Dorsolateral prefrontal cortex (tissue), 120 donors: ENCODE measurements at regions of chr10 and their contacts with region 1.

Region 1: DNA sequence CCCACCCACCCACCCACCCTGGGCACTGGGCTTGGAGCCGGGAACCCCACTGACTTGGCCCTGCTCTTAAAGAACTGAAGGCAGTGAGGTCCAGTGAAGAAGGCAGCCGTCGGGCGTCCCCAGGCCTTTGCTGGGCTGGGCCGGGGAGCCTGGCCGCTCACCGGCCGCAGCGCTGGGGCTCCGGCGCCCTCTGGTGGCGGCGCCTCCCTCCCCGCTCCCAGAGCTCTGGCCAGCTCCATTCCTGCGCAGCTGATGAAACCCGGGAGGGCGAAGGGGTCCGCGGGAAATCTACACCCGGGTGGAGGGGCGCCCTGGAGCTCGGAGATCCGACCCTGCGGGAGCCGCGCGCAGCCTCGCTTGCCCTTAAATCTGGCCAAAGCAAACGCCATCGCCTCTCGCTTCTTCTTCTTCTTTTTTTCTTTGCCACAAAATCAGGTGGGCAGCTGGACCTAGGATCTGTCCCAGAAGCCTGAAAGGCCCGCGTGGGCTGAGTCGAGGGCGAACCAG is 1.7 kb upstream of the CXCL12 start:
- DNase-seq: peak in 6 of 10 donors; percentile 40 to 79 (median 48)
- H3K4me3 ChIP-seq: peak overlapping the region in 22 of 59 donors; percentile 1 to 51 (median 23)
- H3K27ac ChIP-seq: no peak overlapping the region
- H3K27me3 ChIP-seq: peaks cover 0 to 55% (median 14%) of the 10 kb centered on the region in 45 donors
- CTCF ChIP-seq: peak; percentile 58 to 94 (median 85)

Region 2: DNA sequence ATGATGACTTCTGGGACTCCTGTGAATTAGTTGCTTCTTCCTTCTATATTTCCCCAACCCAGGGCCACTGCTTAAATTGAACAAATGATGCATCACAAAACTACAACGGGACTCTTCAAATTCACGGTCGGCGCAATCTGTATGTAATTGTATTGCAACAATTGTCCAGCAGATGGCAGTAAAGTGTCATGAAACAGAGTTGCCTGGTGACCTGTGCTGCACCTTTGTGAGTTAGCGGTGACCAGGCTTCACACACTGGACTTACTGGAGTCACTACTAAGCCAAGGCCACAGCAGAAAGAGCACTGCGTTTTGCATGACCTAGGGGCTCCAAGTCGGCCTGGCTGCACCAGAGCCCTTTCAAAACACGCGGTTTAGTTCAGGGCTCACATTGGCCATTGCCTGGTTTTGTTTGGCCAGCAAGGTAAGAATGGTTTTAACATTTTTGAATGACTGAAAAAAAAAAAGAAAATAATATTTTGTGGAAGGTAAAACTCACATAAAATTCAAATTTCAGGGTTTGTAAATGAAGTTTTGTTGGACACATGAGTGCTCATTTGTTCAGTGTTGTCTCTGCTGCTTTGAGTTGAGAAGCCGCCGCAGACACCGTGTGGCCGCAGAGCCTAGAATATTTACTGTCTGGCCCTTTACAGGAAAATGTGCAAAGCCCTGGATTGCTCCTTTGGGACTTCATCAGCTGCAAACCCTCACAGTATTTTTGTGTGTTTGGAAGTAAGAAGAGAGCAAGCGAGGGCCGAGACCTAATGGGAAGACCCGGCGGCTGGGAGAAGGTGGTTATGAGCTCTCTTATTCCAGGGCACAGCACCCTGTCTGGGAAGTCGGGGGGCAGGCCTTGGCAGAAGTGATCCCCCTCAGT is 714.7 kb before region 1 on chr10:
- intact Hi-C with region 1: loop called (anchors 5 kb)
- DNase-seq: peak in 3 of 10 donors; percentile 50 to 61 (median 59)
- H3K4me3 ChIP-seq: no peak overlapping the region
- H3K27ac ChIP-seq: no peak overlapping the region
- H3K27me3 ChIP-seq: peaks cover 0 to 39% (median 18%) of the 10 kb centered on the region in 45 donors
- CTCF ChIP-seq: peak; percentile 64 to 95 (median 85)

Region 3: DNA sequence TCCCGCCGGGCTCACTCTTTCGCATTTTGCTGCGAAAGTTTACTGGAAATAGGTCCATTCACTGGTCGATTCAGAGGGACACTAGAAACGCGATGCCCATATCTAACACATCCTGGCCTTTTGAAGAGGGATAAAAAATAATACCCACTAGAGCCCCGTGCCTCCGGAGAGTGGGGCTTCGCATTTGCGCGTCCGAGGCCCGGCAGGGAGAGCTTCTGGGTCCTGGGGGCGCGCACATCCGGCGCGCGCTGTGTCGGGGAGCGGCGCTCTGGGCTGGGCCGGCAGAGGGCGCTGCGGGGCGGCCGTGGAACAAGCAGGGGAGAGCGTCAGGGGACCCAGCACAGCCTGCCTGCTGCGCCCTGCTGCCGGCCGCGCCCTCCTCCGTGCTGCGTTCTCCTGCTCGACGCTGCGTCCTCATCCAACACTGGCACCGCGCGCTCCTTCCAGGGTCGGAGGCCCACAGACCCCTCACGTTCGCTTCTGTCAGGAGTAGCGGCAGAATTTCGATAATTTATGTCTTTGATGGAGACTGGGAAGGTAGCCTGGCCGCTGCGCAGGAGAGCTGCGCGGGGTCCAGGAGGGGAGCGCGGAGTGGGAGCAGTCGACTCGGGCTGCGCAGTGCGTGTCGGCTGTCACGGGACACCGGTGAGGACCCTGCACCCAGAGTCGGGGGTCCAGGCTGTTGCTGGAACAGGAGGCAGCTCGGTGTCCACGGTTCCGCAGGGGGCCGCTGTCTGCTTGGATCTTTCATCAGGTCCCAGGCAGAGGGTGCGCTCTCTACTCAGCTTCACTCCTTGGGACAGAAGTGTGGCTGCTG is 696.4 kb before region 1 on chr10:
- intact Hi-C with region 1: loop called (anchors 2 to 5 kb)
- DNase-seq: peak; percentile 63 to 88 (median 78)
- H3K4me3 ChIP-seq: peak overlapping the region; percentile 34 to 88 (median 68)
- H3K27ac ChIP-seq: peak overlapping the region in 37 of 59 donors; percentile 5 to 82 (median 67)
- H3K27me3 ChIP-seq: peaks cover 0 to 9% (median 0%) of the 10 kb centered on the region in 45 donors
- CTCF ChIP-seq: peak; percentile 41 to 98 (median 82)

Region 4: GRCh38 chr10:44293842-44294241 is 92.8 kb before region 1 on chr10:
- intact Hi-C with region 1: loop called in 1 of 2 experiments (anchors 5 kb)
- DNase-seq: no peak
- H3K4me3 ChIP-seq: peak overlapping the region in 16 of 59 donors; percentile 29 to 58 (median 46)
- H3K27ac ChIP-seq: peak overlapping the region in 42 of 59 donors; percentile 3 to 83 (median 52)
- H3K27me3 ChIP-seq: peaks cover 0 to 6% (median 0%) of the 10 kb centered on the region in 45 donors
- CTCF ChIP-seq: no peak

Region 5: DNA sequence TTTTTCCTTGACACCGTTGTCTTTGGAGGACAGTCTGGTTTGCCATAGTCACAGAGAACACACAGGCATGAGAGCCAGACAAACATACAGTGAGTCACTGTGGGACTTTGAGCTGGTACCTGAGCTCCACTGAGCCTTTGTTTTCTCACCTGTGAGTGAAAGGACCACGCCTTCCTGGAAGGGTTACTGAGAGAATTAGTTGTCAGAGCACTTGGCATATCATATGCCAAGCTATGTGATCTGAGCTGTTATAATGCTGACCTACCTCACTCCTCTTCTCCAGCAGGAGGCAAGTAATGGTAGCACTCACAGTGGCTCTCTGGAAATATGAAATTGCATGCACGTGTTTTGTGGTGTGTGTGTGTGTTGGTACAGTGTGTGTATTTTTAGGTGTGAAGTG is 61.4 kb before region 1 on chr10:
- intact Hi-C with region 1: no loop called
- DNase-seq: no peak
- H3K4me3 ChIP-seq: no peak overlapping the region
- H3K27ac ChIP-seq: no peak overlapping the region
- H3K27me3 ChIP-seq: no peaks in the 10 kb centered on the region
- CTCF ChIP-seq: no peak

Region 6: GRCh38 chr10:44439239-44439957 is 52.8 kb after region 1 on chr10:
- intact Hi-C with region 1: no loop called
- DNase-seq: peak in 1 of 10 donors; percentile 28
- H3K4me3 ChIP-seq: no peak overlapping the region
- H3K27ac ChIP-seq: peak overlapping the region in 14 of 59 donors; percentile 3 to 75 (median 53)
- H3K27me3 ChIP-seq: peaks cover 0 to 4% (median 0%) of the 10 kb centered on the region in 45 donors
- CTCF ChIP-seq: no peak

Region 7: DNA sequence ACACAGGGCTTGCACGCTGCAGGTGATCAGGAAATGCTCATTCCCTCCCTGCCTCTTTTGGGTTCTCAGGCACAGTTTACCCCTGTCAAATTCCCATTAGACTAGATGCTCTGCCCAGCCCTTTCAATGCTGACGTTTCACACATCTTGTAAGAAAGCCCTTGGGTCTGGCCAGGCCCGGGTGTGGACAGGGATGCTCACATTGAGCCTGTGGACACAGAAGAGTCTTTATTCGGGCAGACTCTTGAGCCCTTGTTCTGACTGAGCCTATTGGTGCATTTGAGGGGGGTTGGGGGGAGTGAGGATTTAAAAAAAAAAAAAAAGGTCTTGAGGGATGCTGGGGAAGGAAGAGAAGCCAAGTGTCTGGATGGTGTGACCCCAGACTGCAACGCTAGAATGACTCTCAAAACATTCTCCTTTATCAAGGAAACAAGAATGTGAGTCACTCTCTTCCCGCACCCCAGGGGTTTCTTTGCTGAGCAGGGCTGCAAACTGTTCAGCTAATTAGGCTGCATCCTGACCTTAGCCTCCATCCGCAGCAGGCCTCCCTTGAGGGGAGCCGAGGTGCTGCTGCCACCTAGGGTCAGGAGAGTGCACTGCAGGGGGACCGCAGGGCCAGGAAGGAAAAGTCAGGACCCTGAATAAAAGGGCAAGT is 470.9 kb after region 1 on chr10:
- intact Hi-C with region 1: loop called (anchors 5 to 10 kb)
- DNase-seq: peak in 7 of 10 donors; percentile 28 to 70 (median 48)
- H3K4me3 ChIP-seq: no peak overlapping the region
- H3K27ac ChIP-seq: no peak overlapping the region
- H3K27me3 ChIP-seq: peaks cover 0 to 7% (median 0%) of the 10 kb centered on the region in 45 donors
- CTCF ChIP-seq: peak; percentile 84 to 99 (median 96)

Region 8: DNA sequence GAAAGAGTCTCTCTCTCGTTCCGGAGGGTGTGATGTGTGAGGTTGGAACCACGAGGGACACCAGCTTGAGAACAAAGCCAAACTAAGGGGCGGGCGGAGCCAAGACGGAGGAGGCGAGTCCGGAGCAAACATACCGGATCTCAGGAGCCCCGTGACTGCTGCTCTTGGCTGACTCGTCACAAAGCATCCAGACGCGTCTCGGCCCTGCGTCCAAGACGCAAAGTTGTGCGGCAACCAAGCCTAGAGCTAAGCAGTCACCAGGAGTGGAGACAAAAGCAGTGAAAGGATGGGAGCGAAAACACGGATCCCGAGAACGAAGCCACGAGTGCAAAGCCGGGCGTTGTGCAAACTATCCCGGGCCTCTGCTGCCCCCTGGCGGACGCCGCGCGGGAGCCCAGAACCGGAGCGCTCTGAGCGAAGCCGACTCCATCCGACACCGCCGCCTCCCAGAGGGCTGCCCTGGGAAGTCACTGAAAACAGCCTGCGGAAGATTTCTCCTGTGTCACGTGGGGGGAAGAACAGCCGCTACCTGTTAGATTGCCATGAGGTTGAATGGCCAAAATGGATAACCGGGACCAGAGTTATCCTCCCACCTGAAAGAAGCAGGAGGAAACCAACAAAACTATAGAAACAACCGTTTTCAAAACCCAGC is 478.2 kb after region 1 on chr10:
- intact Hi-C with region 1: loop called (anchors 5 to 10 kb)
- DNase-seq: peak; percentile 81 to 95 (median 92)
- H3K4me3 ChIP-seq: peak overlapping the region; percentile 16 to 74 (median 60)
- H3K27ac ChIP-seq: peak overlapping the region in 39 of 59 donors; percentile 1 to 80 (median 51)
- H3K27me3 ChIP-seq: peaks cover 0 to 7% (median 0%) of the 10 kb centered on the region in 45 donors
- CTCF ChIP-seq: peak; percentile 68 to 99 (median 97)